ENCODE measurements at regions of chr6 and their contacts with region 1.

Region 1: DNA sequence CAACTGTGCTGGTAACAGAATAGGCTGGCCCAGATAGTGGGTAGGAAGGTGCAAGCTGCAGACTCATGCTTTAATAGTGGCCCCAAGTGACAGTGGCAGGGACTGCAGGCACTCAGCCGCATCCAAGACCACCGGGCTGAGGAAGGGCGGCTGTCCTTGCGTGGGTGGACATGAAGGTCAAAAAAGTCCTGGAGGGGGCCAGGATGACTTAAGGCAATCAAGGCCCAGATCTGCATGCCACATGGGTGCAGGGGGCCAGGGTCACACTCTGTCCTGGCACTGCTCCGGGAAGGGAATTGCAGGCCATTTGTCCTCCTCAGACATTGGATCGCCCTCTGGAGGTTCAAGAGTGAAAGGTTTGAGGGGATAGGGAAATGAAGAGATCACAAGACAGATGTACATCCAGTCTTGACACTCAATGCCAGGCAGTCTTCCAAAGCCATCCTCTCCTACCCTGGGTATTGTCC is 10.4 kb upstream of the VNN2 start:
- DNase-seq: peak in 1 of 2 experiments; percentile 15
- H3K4me3 ChIP-seq: no peak overlapping the region
- H3K27ac ChIP-seq: no peak overlapping the region
- H3K4me1 ChIP-seq: peaks cover 17% of the 10 kb centered on the region
- H3K27me3 ChIP-seq: no peaks in the 10 kb centered on the region
- CTCF ChIP-seq: peak; percentile 71

Region 2: DNA sequence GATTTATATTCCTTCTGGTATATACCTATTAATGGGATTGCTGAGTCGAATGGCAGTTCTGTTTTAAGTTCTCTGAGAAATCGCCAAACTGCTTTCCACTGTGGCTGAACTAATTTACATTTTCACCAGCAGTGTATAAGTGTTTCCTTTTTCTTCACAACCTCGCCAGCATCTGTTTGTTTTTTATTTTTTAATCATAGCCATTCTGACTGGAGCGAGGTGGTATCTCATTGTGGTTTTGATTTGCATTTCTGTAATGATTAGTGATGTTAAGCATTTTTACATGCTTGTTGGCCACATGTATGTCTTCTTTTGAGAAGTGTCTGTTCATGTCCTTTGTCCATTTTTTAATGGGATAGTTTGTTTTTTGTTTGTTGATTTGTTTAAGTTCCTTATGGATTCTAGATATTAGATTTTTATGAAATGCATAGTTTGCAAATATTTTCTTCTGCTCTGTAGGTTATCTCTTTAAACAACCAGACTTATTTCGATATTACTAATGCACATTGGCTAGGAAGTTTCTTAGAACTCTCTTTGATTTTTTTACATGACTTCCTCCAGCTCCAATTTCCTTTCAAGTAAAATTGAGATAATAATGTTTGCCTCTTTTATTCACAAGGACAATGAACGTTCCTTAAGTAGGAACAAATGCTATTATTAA is 42.0 kb before region 1 on chr6:
- CTCF ChIA-PET with region 1: no interaction called
- POLR2A ChIA-PET with region 1: interaction called, 21 read pairs
- intact Hi-C with region 1: no loop called
- DNase-seq: no peak
- H3K4me3 ChIP-seq: no peak overlapping the region
- H3K27ac ChIP-seq: no peak overlapping the region
- H3K4me1 ChIP-seq: peaks cover 12% of the 10 kb centered on the region
- H3K27me3 ChIP-seq: no peaks in the 10 kb centered on the region
- CTCF ChIP-seq: no peak

Region 3: GRCh38 chr6:133741375-133741861 is 973.3 kb after region 1 on chr6:
- CTCF ChIA-PET with region 1: no interaction called
- POLR2A ChIA-PET with region 1: interaction called, 14 read pairs
- intact Hi-C with region 1: no loop called
- DNase-seq: peak; percentile 29 to 89
- H3K4me3 ChIP-seq: no peak overlapping the region; the same call in 1 of the 2 replicates
- H3K27ac ChIP-seq: peak overlapping the region; percentile 63
- H3K4me1 ChIP-seq: peaks cover 41% of the 10 kb centered on the region
- H3K27me3 ChIP-seq: no peaks in the 10 kb centered on the region
- CTCF ChIP-seq: no peak; the same call in 1 of the 2 replicates

Measured in PC-9 (cell line).